Ascending aorta (tissue), 2 donors: ENCODE measurements at regions of chr17 and their contacts with region 1.

Region 1: GRCh38 chr17:29069526-29070041 is 26.6 kb downstream of the PIPOX start:
- DNase-seq: no peak
- H3K4me3 ChIP-seq: no peak overlapping the region
- H3K27ac ChIP-seq: no peak overlapping the region
- H3K4me1 ChIP-seq: peaks cover 0 to 9% of the 10 kb centered on the region in 2 donors
- H3K27me3 ChIP-seq: no peaks in the 10 kb centered on the region
- CTCF ChIP-seq: no peak

Region 2: DNA sequence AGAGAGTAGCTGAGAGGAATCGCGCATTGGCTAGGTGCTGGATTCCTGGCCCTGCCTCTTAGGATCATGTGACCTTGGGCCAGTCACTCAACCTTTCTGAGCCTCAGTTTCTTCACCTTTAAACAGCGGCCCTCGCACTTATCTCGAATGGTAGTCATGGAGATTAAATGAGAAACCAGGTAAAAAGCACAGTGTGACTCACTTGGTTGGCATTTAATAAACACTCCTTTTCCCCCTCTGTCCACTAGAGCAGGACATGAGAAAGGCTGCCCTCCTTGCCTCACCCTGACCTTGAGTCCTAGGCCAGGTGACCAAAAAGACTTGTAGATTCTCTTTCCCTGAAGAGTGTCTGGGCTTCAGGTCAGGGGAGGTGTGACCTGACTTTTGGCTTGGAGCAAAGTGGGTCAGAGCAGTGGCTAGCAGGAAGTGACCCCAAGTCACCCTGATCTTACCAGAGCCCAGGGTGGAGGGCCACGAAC is 38.4 kb after region 1 on chr17:
- intact Hi-C with region 1: no loop called
- DNase-seq: no peak
- H3K4me3 ChIP-seq: no peak overlapping the region
- H3K27ac ChIP-seq: no peak overlapping the region
- H3K4me1 ChIP-seq: peaks cover 3% of the 10 kb centered on the region in 2 donors
- H3K27me3 ChIP-seq: no peaks in the 10 kb centered on the region
- CTCF ChIP-seq: no peak

Region 3: GRCh38 chr17:29124117-29124924 is 54.7 kb after region 1 on chr17:
- intact Hi-C with region 1: loop called (anchors 10 kb)
- DNase-seq: no peak
- H3K4me3 ChIP-seq: no peak overlapping the region
- H3K27ac ChIP-seq: peak overlapping the region in 1 of 2 donors; percentile 4
- H3K4me1 ChIP-seq: peaks cover 0 to 11% of the 10 kb centered on the region in 2 donors
- H3K27me3 ChIP-seq: no peaks in the 10 kb centered on the region
- CTCF ChIP-seq: peak; percentile 45 to 74 (median 68)

Region 4: DNA sequence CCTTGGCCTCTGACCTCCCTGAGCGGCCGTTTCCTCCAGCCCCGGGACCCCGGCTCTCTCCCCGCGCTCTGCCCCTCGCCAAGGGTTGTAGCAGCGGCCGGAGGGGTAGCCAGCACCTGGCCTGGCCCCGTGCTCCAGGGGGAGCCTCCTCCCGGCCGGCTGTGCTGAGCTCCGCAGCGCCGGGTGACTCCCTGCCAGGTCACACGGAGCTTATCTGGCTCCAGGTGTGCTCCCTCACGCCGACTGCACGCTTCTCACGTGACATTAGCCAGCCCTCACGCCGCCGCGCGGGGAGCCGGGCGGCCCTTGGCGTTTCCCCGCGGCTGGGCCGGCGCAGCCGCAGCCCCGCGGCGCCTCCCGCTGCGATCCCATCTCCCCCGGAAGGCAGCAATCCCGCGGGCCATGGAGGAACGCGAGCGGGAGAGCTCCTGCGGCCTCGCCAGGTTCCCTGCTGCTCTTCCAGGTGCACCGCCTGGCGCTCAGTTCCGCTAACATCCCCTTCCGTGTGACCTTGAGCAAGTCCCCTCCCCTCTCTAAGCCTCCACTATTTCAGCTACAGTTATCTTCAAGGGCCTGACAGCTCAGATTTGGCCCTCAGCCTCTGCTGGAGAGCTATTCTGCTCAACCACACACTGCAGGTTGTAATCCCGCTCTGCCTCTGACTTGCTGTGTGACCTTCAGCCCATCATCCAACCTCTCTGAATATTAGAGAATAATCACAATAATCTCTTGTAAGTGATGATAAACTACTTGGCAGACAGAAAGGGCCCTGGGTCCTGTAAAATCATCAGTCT is 107.2 kb after region 1 on chr17:
- intact Hi-C with region 1: no loop called
- DNase-seq: no peak
- H3K4me3 ChIP-seq: peak overlapping the region; percentile 63 to 74
- H3K27ac ChIP-seq: peak overlapping the region; percentile 13 to 93
- H3K4me1 ChIP-seq: peaks cover 12 to 30% of the 10 kb centered on the region in 2 donors
- H3K27me3 ChIP-seq: no peaks in the 10 kb centered on the region
- CTCF ChIP-seq: no peak